ENCODE measurements at regions of chr12 and their contacts with region 1.

Region 1: GRCh38 chr12:46342562-46343033 is 30.0 kb downstream of the SLC38A2 start:
- DNase-seq: peak; percentile 83
- H3K4me3 ChIP-seq: no peak overlapping the region
- H3K27ac ChIP-seq: no peak overlapping the region
- H3K4me1 ChIP-seq: no peaks in the 10 kb centered on the region
- H3K27me3 ChIP-seq: no peaks in the 10 kb centered on the region
- CTCF ChIP-seq: peak; percentile 77

Region 2: DNA sequence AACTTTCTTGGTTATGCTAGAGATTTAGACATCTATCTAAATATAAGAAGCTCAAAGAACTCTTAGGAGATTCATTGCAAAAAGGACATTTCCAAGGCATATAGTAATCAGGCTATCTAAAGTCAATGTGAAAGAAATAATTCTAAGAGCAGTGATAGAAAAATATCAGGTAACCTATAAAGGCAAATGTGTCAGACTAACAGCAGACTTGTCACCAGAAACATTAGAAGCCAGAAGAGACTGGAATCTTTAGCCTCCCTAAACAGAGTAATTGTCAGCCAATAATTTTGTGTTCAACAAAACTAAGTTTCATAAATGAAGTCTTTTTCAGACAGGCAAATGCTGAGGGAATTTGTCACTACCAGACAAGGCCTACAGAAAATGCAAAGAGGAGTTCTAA is 230.2 kb before region 1 on chr12:
- CTCF ChIA-PET with region 1: no interaction called
- POLR2A ChIA-PET with region 1: no interaction called
- intact Hi-C with region 1: no loop called
- DNase-seq: no peak
- H3K4me3 ChIP-seq: no peak overlapping the region
- H3K27ac ChIP-seq: no peak overlapping the region
- H3K4me1 ChIP-seq: no peaks in the 10 kb centered on the region
- H3K27me3 ChIP-seq: no peaks in the 10 kb centered on the region
- CTCF ChIP-seq: no peak

Region 3: DNA sequence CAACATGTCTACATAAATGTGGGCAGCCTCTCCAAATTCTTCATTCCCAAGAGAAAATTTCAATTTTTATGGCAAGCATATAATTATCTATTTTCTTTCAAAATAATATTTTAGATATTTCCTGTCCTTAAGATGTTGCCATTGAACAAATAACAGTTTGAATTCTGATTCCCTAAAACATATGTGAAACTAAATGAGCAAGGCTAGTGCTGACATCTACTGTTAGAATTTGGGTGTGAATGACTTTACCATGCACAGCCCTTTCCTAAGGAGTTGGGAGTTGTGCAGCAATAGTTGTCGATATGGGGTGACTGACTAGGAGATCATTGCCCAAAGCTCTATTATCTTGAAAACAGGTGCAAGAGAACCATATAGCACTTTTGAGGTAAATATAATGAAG is 591.3 kb after region 1 on chr12:
- CTCF ChIA-PET with region 1: no interaction called
- POLR2A ChIA-PET with region 1: no interaction called
- intact Hi-C with region 1: loop called (anchors 5 kb)
- DNase-seq: peak; percentile 74
- H3K4me3 ChIP-seq: no peak overlapping the region
- H3K27ac ChIP-seq: peak overlapping the region; percentile 45
- H3K4me1 ChIP-seq: peaks cover 3% of the 10 kb centered on the region
- H3K27me3 ChIP-seq: no peaks in the 10 kb centered on the region
- CTCF ChIP-seq: peak; percentile 73

Measured in A673 (cell line).